IMR-90 (cell line): ENCODE measurements at regions of chr10 and their contacts with region 1.

Region 1: GRCh38 chr10:52729271-52730104 is 43.1 kb downstream of the MBL2 start:
- DNase-seq: peak; percentile 43
- ATAC-seq: peak; percentile 82
- H3K4me3 ChIP-seq: no peak overlapping the region
- H3K27ac ChIP-seq: no peak overlapping the region
- H3K4me1 ChIP-seq: no peaks in the 10 kb centered on the region
- H3K27me3 ChIP-seq: no peaks in the 10 kb centered on the region
- CTCF ChIP-seq: peak; percentile 68
- POLR2A ChIP-seq: no peak
- RAD21 ChIP-seq: peak; percentile 66

Region 2: DNA sequence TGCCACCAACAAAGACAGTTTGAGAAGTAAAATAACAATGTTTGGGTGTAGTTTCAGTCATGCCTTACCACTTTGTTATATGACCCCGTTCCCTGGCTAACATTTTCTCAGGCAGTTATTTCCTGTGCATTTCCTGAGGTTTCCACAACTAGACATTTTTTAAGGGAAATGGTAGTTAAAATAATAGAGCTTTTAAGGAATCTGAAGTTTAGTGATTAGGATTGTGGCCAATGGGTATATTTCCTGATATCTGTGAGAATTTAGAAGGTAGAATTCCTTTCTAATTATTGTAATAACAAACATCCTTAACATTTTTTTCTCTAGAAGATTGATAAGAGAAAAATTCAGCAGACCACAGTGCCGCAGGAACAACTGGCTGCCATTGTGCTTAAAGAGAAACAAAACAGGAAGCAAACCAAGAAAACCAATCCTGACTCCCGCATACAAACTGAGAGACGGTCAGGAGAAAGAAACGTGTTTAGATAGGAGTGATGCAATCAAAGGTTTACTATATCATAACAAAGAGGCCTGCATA is 150.6 kb before region 1 on chr10:
- CTCF ChIA-PET with region 1: no interaction called
- POLR2A ChIA-PET with region 1: no interaction called
- dilution Hi-C with region 1: no loop called
- in situ Hi-C with region 1: no loop called
- intact Hi-C with region 1: loop called (anchors 10 kb)
- DNase-seq: peak; percentile 77
- ATAC-seq: peak; percentile 89
- H3K4me3 ChIP-seq: no peak overlapping the region
- H3K27ac ChIP-seq: peak overlapping the region; percentile 18; the same call in 1 of the 2 replicates
- H3K4me1 ChIP-seq: peaks cover 2% of the 10 kb centered on the region; the same call in 1 of the 2 replicates
- H3K27me3 ChIP-seq: no peaks in the 10 kb centered on the region
- CTCF ChIP-seq: no peak
- POLR2A ChIP-seq: no peak
- RAD21 ChIP-seq: no peak

Region 3: GRCh38 chr10:52644373-52645186 is 84.9 kb before region 1 on chr10:
- CTCF ChIA-PET with region 1: interaction called, 8 read pairs
- POLR2A ChIA-PET with region 1: no interaction called
- dilution Hi-C with region 1: no loop called
- in situ Hi-C with region 1: loop called (anchors 5 kb)
- intact Hi-C with region 1: loop called (anchors 1 kb)
- DNase-seq: peak; percentile 32
- ATAC-seq: peak; percentile 82
- H3K4me3 ChIP-seq: no peak overlapping the region
- H3K27ac ChIP-seq: no peak overlapping the region
- H3K4me1 ChIP-seq: no peaks in the 10 kb centered on the region
- H3K27me3 ChIP-seq: no peaks in the 10 kb centered on the region; the same call in 1 of the 2 replicates
- CTCF ChIP-seq: peak; percentile 75
- POLR2A ChIP-seq: no peak
- RAD21 ChIP-seq: peak; percentile 68